AG04450 (cell line): ENCODE measurements at regions of chr16 and their contacts with region 1.

Region 1: DNA sequence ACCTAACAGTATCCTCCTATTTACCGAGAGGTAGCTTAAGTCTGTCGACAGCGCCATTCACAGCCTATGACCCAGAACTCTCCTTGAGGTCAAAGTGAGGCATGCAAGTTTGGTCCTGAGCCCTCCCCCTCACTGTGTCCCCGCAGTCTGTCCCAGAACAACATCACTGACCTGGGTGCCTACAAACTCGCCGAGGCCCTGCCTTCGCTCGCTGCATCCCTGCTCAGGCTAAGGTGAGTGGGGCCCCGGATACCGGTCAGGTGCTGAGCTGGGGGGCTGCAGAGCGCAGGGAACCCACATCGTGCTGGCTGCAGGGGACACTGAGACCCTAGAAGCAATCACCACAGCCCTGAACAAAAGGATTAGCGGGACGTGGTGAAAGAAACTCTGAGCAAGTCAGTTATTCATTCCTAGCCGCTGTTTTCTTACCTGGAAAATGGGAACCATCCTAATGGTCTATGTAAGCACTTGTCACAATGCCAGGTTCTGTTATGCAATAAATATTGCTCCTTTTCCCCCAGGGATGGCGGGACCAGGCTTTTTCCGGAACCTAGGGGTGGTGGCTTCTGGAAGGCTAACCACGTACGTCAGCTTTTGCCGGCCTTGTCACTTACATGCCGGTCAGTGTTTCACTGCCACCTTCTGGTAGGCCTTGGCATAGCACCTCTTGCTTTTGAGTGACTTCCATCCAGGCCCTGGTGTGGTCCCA is 23.8 kb downstream of the DEXI start:
- DNase-seq: peak; percentile 86
- H3K4me3 ChIP-seq: no peak overlapping the region
- H3K27ac ChIP-seq: no peak overlapping the region
- H3K27me3 ChIP-seq: no peaks in the 10 kb centered on the region
- CTCF ChIP-seq: peak; percentile 99

Region 2: DNA sequence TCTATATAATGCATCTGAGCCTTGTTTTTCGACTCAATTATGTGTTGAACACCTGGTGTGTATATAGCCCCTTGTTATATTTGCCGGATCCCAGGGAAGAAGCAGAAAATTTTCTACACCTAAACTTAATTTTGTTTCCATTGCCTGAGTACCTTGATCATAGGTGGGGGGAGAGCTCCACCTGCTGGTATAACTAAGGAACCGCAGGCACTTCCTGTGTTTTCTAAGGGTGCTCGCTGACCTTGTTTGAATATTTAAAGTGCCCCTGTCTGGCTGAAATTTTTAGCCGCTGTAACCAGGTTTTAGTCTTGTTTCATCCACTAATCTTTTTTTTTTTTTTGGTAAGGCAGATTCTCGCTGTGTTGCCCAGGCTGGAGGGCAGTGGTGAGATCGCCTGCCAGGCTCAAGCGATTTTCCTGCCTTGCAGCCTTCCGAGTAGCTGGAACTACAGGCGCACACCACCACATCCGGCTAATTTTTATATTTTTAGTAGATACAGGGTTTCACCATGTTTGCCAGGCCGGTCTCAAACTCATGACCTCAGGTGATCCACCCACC is 181.3 kb before region 1 on chr16:
- CTCF ChIA-PET with region 1: interaction called, 18 read pairs
- POLR2A ChIA-PET with region 1: no interaction called
- DNase-seq: peak; percentile 38
- H3K4me3 ChIP-seq: no peak overlapping the region
- H3K27ac ChIP-seq: no peak overlapping the region
- H3K27me3 ChIP-seq: no peaks in the 10 kb centered on the region
- CTCF ChIP-seq: peak; percentile 95

Region 3: DNA sequence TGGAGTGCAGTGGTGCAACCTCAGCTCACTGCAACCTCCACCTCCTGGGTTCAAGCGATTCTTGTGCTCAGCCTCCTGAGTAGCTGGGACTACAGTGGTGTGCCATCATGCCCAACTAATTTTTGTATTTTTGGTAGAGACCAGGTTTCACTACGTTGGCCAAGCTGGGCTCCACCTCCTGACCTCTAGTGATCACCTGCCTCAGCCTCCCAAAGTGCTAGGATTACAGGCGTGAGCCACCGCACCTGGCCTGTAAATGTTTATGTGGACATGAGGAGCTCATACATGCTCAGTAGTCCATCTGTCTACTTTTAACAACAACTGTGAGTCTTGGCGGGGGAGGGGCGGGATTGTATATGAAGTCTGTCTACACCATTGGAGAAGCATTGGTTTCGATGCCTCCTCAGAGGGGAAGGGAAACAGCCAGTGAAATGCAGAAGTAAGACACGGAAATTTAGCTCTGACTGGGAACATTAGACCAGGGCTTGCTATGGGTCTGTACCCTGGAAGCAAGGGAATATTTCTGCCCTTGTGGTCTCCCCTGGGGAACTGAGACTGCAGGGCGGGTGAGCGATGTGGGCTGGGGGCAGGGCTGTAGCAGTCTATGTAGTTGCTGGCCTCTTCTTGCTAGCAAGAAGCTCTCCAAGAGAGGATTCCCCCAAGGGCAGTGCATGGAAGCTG is 165.5 kb before region 1 on chr16:
- CTCF ChIA-PET with region 1: interaction called, 23 read pairs
- POLR2A ChIA-PET with region 1: interaction called, 3 read pairs
- DNase-seq: no peak
- H3K4me3 ChIP-seq: no peak overlapping the region
- H3K27ac ChIP-seq: no peak overlapping the region
- H3K27me3 ChIP-seq: no peaks in the 10 kb centered on the region
- CTCF ChIP-seq: no peak

Region 4: GRCh38 chr16:10932915-10933710 is 14.7 kb after region 1 on chr16:
- CTCF ChIA-PET with region 1: interaction called, 16 read pairs
- POLR2A ChIA-PET with region 1: no interaction called
- DNase-seq: no peak
- H3K4me3 ChIP-seq: no peak overlapping the region
- H3K27ac ChIP-seq: no peak overlapping the region
- H3K27me3 ChIP-seq: no peaks in the 10 kb centered on the region
- CTCF ChIP-seq: no peak

Region 5: GRCh38 chr16:11004957-11005610 is 86.6 kb after region 1 on chr16:
- CTCF ChIA-PET with region 1: no interaction called
- POLR2A ChIA-PET with region 1: no interaction called
- DNase-seq: peak; percentile 58
- H3K4me3 ChIP-seq: no peak overlapping the region
- H3K27ac ChIP-seq: peak overlapping the region; percentile 92
- H3K27me3 ChIP-seq: no peaks in the 10 kb centered on the region
- CTCF ChIP-seq: no peak

Region 6: GRCh38 chr16:11333711-11334110 is 415.3 kb after region 1 on chr16:
- CTCF ChIA-PET with region 1: no interaction called
- POLR2A ChIA-PET with region 1: no interaction called
- DNase-seq: no peak
- H3K4me3 ChIP-seq: no peak overlapping the region
- H3K27ac ChIP-seq: no peak overlapping the region
- H3K27me3 ChIP-seq: no peaks in the 10 kb centered on the region
- CTCF ChIP-seq: no peak